Aorta (tissue), 5 donors: ENCODE measurements at regions of chr2 and their contacts with region 1.

Region 1: GRCh38 chr2:239035361-239036078 is 187.6 kb downstream of the TWIST2 start:
- DNase-seq: peak in 1 of 2 donors; percentile 90
- ATAC-seq: peak; percentile 78
- H3K4me3 ChIP-seq: no peak overlapping the region
- H3K27ac ChIP-seq: no peak overlapping the region
- H3K4me1 ChIP-seq: no peaks in the 10 kb centered on the region
- H3K27me3 ChIP-seq: no peaks in the 10 kb centered on the region

Region 2: GRCh38 chr2:239106314-239106908 is 70.9 kb after region 1 on chr2:
- intact Hi-C with region 1: loop called in 1 of 2 experiments (anchors 5 kb)
- DNase-seq: peak in 1 of 2 donors; percentile 69
- ATAC-seq: no peak
- H3K4me3 ChIP-seq: no peak overlapping the region
- H3K27ac ChIP-seq: no peak overlapping the region
- H3K4me1 ChIP-seq: no peaks in the 10 kb centered on the region
- H3K27me3 ChIP-seq: no peaks in the 10 kb centered on the region